ENCODE measurements at regions of chrX and their contacts with region 1.

Region 1: GRCh38 chrX:3037218-3037617 is 4.1 kb upstream of the ARSF start:
- DNase-seq: no peak
- ATAC-seq: no peak
- H3K4me3 ChIP-seq: no peak overlapping the region
- H3K27ac ChIP-seq: no peak overlapping the region
- H3K4me1 ChIP-seq: no peaks in the 10 kb centered on the region
- H3K27me3 ChIP-seq: no peaks in the 10 kb centered on the region
- CTCF ChIP-seq: no peak
- POLR2A ChIP-seq: no peak

Region 2: GRCh38 chrX:2828344-2828958 is 208.8 kb before region 1 on chrX and contains the start of gene GYG2:
- intact Hi-C with region 1: no loop called
- DNase-seq: peak in 3 of 4 donors; percentile 10 to 54 (median 24)
- ATAC-seq: peak; percentile 48
- H3K4me3 ChIP-seq: peak within 1 kb of the TSS; percentile 22 to 25
- H3K27ac ChIP-seq: no peak within 1 kb of the TSS
- H3K4me1 ChIP-seq: peaks cover 10% of the 10 kb centered on the region
- H3K27me3 ChIP-seq: no peaks in the 10 kb centered on the region
- CTCF ChIP-seq: no peak
- POLR2A ChIP-seq: no peak
- total RNA-seq, gene GYG2: 6.0 to 21.4 TPM

Region 3: GRCh38 chrX:2875798-2876399 is 161.3 kb before region 1 on chrX:
- intact Hi-C with region 1: loop called (anchors 10 kb)
- DNase-seq: peak in 2 of 4 donors; percentile 41 to 45
- ATAC-seq: peak; percentile 52
- H3K4me3 ChIP-seq: no peak overlapping the region
- H3K27ac ChIP-seq: no peak overlapping the region
- H3K4me1 ChIP-seq: no peaks in the 10 kb centered on the region
- H3K27me3 ChIP-seq: no peaks in the 10 kb centered on the region
- CTCF ChIP-seq: peak; percentile 21 to 63 (median 44)
- POLR2A ChIP-seq: no peak

Region 4: GRCh38 chrX:3176439-3176820 is 139.2 kb after region 1 on chrX:
- intact Hi-C with region 1: no loop called
- DNase-seq: no peak
- ATAC-seq: peak; percentile 24
- H3K4me3 ChIP-seq: no peak overlapping the region
- H3K27ac ChIP-seq: no peak overlapping the region
- H3K4me1 ChIP-seq: peaks cover 10% of the 10 kb centered on the region
- H3K27me3 ChIP-seq: no peaks in the 10 kb centered on the region
- CTCF ChIP-seq: no peak
- POLR2A ChIP-seq: no peak